ENCODE measurements at regions of chr17 and their contacts with region 1.

Region 1: GRCh38 chr17:39244600-39245570 is 19.1 kb upstream of the STAC2 start:
- DNase-seq: peak; percentile 88
- ATAC-seq: peak; percentile 94

Region 2: DNA sequence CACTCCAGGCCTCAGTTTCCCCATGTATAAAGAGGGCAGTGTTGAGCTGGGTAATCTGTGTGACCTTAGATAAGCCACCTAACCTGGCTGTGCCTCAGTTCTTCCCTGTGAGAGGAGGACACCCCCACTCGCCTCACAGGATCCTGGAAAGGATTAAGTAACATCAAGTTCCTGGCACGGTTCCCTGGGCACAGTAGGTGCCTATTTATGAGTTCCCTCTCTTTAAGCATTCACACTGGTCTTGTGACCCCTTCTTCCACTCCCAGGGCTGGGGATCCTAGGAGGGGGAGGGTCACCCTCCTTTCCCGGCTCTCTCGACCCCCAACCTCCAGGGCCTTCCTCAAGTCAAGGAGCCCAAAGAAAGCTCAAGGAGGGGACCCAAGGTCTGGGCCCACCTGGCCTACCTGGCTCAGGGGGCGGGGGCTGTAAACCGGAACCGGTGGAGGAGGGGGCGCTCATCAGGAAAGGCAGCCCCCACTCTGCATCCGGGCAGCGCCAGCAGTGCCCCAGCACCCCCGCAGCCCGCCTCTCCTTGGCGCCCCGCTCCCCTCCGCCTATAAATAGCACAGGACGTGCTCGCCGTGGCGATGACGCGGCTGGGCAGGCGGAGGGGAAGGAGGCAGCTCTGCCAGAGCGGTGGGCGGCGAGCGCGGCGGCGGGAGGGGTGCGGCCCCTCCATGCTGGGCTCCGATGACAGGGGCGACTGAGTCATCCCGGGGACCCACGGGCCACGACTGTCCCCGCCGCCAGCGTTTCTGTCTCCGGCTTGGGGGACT is 35.4 kb before region 1 on chr17:
- intact Hi-C with region 1: loop called (anchors 5 kb)
- DNase-seq: peak; percentile 79
- ATAC-seq: peak; percentile 84